T-cell (primary cell): ENCODE measurements at regions of chr3 and their contacts with region 1.

Region 1: DNA sequence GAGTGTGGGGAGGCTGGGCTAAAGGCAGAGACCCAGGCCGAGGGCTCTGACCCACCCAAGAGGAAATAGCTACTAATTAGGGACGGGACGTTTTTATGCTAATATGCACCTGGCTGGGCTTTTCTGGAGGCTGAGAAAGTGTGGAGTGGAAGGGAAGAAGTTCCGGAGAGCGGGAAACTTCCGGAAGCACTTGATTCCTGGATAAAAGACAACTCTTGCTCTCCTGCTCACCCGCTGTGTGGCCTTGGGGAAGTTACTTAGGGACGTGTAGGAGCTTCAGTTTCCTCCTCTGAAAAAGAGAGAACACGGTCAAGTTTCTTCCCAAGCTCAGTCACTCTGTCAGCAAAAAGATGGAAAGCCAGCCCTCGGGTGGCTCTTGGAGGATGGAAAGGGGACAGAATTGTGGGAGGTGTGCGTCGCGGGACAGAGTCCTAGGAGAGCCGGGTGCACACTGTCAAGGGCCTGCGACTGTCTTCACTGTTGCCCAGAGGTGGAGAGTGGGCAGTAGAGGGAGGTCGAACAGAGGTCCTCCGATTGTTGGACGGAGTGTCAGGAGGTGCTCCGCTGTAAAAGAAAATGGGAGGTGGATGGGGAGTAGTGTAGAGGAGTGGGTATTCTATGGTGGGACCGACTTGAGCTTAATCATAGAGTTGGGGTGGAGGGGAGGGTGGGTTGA is 43.2 kb downstream of the EPHB3 start:
- DNase-seq: no peak
- ATAC-seq: no peak
- H3K4me3 ChIP-seq: no peak overlapping the region
- H3K4me3 Mint-ChIP-seq: peak overlapping the region in 2 of 3 donors; percentile 22 to 40
- H3K27ac ChIP-seq: no peak overlapping the region
- H3K27ac Mint-ChIP-seq: peak overlapping the region in 1 of 2 donors; percentile 12
- H3K4me1 ChIP-seq: peaks cover 13 to 56% of the 10 kb centered on the region in 2 experiments
- H3K4me1 Mint-ChIP-seq: peaks cover 42 to 60% (median 57%) of the 10 kb centered on the region in 3 donors
- H3K27me3 ChIP-seq: peaks cover 5 to 67% of the 10 kb centered on the region in 2 experiments
- H3K27me3 Mint-ChIP-seq: peaks cover 40 to 61% of the 10 kb centered on the region in 2 donors

Region 2: DNA sequence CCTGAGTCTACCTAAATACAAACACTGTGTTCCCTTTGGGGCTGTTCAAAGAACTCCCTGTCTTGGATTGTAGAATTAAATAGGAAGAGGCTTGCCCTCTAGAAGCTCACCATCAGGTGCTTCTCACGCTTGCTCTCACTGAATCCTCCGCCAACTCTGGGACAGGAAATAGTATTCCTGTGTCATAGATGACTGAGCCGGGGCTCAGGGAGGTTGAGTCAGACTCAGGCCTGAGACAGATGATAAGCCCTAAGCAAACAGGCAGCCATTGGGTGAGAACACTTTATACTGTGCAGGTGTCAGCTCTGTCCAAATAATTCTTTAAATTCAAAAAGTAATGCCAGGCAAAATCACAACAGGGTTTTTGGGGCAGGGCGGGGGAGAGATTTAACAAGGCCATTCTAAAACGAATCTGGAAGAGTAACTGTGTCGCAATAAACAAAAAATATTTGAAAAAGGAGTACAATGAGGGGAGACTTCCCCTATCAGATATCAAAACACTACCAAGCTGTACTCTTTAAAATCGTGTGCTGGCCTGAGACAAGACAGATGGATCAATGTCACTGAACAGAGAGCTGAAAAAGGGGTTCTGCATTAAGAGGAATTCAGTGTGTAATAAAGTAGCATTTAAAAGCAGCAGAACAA is 15.8 kb after region 1 on chr3:
- CTCF ChIA-PET with region 1: interaction called in 1 of 2 experiments, 4 read pairs
- POLR2A ChIA-PET with region 1: interaction called in 1 of 2 experiments, 10 read pairs
- DNase-seq: no peak
- ATAC-seq: no peak
- H3K4me3 ChIP-seq: no peak overlapping the region
- H3K4me3 Mint-ChIP-seq: no peak overlapping the region
- H3K27ac ChIP-seq: no peak overlapping the region
- H3K27ac Mint-ChIP-seq: no peak overlapping the region
- H3K4me1 ChIP-seq: peaks cover 17 to 21% of the 10 kb centered on the region in 2 experiments
- H3K4me1 Mint-ChIP-seq: peaks cover 20 to 24% (median 22%) of the 10 kb centered on the region in 3 donors
- H3K27me3 ChIP-seq: peaks cover 0 to 26% of the 10 kb centered on the region in 2 experiments
- H3K27me3 Mint-ChIP-seq: peaks cover 3 to 7% of the 10 kb centered on the region in 2 donors